Brain microvascular endothelial cell (primary cell): ENCODE measurements at regions of chr6 and their contacts with region 1.

Region 1: GRCh38 chr6:81752138-81752920 is at the start of gene TENT5A:
- DNase-seq: peak; percentile 90
- H3K4me3 ChIP-seq: peak within 1 kb of the TSS; percentile 86
- H3K27ac ChIP-seq: peak within 1 kb of the TSS; percentile 87
- H3K27me3 ChIP-seq: no peaks in the 10 kb centered on the region
- CTCF ChIP-seq: peak; percentile 10

Region 2: DNA sequence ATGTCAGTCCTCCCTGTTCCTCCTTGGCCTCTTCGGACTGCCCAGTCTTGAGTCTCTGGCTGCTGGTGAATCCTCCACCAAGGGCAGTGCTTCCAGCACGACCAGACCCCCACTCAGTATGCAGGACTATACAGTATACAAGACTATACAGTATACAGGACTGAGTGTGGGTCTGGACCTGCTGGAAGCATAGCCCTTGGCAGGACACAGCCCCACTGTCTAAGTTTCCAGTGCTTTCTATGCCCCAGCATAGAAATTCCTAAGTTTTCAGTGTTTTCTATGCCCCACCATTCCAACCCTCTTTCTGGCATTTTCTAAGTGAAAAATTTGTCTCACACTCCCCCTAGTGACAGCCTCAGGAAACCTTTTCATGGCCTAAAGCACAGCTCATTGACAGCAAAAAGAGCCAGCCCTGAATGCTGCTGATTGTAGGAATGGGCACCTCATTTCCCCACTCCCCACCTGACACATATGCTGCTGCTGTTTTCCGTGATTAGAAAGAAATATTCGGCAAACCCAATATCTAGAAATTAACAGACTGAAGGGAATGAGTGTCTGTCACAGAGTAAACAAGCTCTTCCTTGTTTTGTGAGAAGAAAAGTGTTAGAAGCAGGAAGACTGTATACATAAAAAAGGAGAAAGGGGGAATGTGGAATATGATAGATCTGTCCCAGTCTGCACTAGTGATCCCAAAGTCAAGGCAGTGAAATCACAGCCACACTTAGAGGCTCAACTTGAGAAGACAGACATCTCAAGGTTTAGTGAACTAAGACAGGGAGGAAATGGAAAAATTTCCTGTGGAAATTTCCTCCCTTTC is 288.3 kb after region 1 on chr6:
- in situ Hi-C with region 1: loop called (anchors 25 kb)
- DNase-seq: peak; percentile 64
- H3K4me3 ChIP-seq: no peak overlapping the region
- H3K27ac ChIP-seq: no peak overlapping the region
- H3K27me3 ChIP-seq: no peaks in the 10 kb centered on the region
- CTCF ChIP-seq: peak; percentile 85